Dendritic cell treated with granulocyte-macrophage colony-stimulating factor and Interleukin-4, amounts not matched to agents 40 ng/mL and 50 ng/mL, for 4 days (primary cell): ENCODE measurements at regions of chrX and their contacts with region 1.

Region 1: DNA sequence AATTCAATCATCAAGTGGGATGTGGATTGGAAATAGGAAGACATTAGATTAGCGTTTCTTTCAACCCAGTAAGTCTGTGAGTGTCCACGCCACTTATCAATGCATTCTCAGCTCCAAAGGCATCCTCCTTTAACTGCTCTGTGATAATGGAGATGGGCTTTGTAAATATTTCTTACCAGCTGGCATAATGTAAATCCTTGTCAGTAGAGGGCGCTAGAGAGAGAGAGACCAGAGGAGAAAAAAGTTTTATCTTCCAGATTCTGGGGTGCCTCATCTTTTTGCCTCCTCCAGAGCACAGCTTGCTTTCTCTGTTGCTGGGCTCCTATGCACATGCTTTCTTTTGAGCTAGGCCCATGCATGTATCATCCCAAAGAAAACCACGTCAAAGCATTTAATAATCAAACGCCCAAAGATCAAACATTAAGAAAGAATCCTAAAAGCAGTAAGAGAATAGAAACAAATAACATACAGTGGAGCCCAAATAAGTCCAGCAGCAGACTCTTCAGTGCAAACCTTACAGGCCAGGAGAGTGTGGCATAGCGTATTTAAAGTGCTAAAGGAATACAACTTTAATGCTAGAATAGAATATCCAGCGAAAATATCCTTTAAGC is 9.6 kb upstream of the MTMR1 start:
- H3K4me3 Mint-ChIP-seq: no peak overlapping the region
- H3K27ac Mint-ChIP-seq: no peak overlapping the region
- H3K4me1 Mint-ChIP-seq: peaks cover 6% of the 10 kb centered on the region
- H3K27me3 Mint-ChIP-seq: peaks cover 1% of the 10 kb centered on the region

Region 2: GRCh38 chrX:150715184-150715583 is 31.5 kb after region 1 on chrX:
- intact Hi-C with region 1: loop called (anchors 1 kb)
- H3K4me3 Mint-ChIP-seq: no peak overlapping the region
- H3K27ac Mint-ChIP-seq: no peak overlapping the region
- H3K4me1 Mint-ChIP-seq: peaks cover 16% of the 10 kb centered on the region
- H3K27me3 Mint-ChIP-seq: no peaks in the 10 kb centered on the region

Region 3: DNA sequence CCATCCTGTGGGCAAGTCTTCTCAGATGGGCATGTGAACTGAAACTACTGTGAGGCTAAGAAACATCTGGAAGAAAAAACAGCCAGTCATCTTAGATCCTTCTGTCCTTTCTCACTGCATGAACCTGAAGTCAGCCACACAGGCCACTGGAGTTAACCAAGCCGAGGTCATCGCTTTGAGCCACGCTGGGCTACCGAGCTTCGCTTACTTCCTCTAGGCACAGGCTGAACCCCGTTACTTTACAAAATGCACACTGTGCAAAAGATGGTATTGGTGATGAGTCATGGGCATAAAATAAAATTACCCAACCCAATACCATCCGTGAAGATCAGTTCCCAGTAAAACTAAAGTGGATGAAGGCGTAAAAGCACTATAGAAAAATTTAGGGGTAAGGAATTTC is 95.7 kb after region 1 on chrX:
- intact Hi-C with region 1: no loop called
- H3K4me3 Mint-ChIP-seq: no peak overlapping the region
- H3K27ac Mint-ChIP-seq: no peak overlapping the region
- H3K4me1 Mint-ChIP-seq: peaks cover 25% of the 10 kb centered on the region
- H3K27me3 Mint-ChIP-seq: no peaks in the 10 kb centered on the region

Region 4: DNA sequence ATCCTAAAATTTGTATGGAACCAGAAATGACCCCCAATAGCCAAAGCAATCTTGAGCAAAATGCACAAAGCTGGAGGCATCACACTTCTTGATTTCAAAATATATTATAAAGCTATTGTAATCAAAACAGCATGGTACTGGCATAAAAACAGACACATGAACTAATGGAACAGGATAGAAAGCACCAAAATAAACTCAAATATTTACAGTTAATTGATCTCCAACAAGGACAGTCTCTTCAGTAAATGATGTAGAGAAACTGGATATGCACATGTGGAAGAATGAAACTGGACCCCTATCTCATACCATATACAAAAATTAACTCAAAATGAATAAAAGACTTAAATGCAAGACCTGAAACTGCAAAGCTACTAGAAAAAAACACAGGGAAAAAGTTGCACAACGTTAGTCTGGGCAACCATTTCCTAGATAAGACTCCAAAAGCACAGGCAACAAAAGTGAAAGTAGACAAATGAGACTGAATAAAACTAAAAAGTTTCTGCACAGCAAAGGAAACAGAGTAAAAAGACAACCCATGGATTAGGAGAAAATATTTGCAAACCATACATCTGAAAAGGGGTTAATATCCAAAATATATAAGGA is 149.9 kb after region 1 on chrX:
- intact Hi-C with region 1: no loop called
- H3K4me3 Mint-ChIP-seq: no peak overlapping the region
- H3K27ac Mint-ChIP-seq: no peak overlapping the region
- H3K4me1 Mint-ChIP-seq: peaks cover 7% of the 10 kb centered on the region
- H3K27me3 Mint-ChIP-seq: no peaks in the 10 kb centered on the region

Region 5: DNA sequence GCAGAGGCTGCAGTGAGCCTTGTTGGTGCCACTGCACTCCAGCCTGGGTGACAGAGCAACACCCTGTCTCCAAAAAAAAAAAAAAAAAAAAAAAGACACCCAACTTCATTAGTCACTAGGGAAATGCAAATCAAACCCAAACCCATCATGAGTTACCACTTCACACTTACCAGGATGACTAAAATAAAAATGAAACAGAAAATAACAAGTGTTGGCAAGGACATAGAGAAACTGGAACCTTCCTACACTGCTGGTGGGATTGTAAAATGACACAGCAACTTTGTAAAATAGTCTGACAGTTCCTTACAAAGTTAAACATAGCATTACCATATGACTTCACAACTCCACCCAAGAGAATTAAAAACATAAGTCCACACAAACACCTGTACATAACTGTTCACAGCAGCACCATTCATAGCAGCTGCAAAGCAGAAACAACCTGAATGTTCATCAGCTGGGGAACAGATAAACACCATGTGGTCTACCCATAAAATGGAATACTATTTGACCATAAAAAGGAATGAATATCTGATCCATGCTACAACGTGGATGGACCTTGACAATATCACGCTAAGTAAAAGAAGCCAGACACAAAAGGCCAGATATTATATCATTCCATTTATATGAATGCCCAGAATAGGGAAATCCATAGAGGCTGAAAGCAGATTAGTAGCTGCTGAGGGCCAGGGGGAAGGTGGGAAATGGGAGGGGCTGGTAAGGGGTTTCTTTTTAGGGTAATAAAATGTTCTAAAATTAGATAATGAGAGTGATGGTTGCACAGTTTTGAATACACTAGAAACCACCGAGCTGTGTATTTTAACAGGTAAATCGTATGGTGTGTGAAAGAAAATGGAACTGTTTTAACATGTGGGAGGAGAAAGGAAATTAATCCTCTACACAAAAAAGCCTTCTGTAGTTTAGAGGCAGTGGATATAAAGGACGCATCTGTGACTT is 196.5 kb after region 1 on chrX:
- intact Hi-C with region 1: no loop called
- H3K4me3 Mint-ChIP-seq: no peak overlapping the region
- H3K27ac Mint-ChIP-seq: no peak overlapping the region
- H3K4me1 Mint-ChIP-seq: peaks cover 12% of the 10 kb centered on the region
- H3K27me3 Mint-ChIP-seq: no peaks in the 10 kb centered on the region

Region 6: GRCh38 chrX:150899191-150899757 is 215.6 kb after region 1 on chrX:
- intact Hi-C with region 1: no loop called
- H3K4me3 Mint-ChIP-seq: peak overlapping the region; percentile 83
- H3K27ac Mint-ChIP-seq: peak overlapping the region; percentile 92
- H3K4me1 Mint-ChIP-seq: peaks cover 20% of the 10 kb centered on the region
- H3K27me3 Mint-ChIP-seq: peaks cover 3% of the 10 kb centered on the region